ENCODE measurements at regions of chr15 and their contacts with region 1.

Region 1: DNA sequence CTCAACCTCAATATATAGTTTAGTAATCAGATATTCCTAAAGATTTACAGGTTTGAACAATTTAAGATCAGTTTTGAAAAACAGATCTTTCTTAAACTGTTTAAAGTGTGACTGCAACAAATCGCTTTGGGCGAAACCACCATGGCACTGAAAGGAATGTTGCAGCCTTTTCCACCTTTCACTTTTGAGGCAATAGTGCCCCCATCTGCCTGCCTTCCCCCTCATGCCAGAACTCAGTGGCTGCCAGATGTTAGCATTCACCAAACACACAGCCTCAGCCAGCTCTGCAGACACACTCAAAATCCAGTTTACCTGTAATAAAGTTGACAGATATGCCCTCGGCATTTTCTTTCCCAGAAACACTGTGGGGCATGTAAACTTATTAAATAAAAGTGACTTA is 3.3 kb downstream of the LYSMD4 start:
- DNase-seq: peak; percentile 67

Region 2: GRCh38 chr15:99275525-99276128 is 454.3 kb before region 1 on chr15:
- intact Hi-C with region 1: loop called in 1 of 2 experiments (anchors 10 kb)
- DNase-seq: no peak

Region 3: GRCh38 chr15:99450896-99451358 is 279.0 kb before region 1 on chr15:
- intact Hi-C with region 1: no loop called
- DNase-seq: peak; percentile 91

Region 4: DNA sequence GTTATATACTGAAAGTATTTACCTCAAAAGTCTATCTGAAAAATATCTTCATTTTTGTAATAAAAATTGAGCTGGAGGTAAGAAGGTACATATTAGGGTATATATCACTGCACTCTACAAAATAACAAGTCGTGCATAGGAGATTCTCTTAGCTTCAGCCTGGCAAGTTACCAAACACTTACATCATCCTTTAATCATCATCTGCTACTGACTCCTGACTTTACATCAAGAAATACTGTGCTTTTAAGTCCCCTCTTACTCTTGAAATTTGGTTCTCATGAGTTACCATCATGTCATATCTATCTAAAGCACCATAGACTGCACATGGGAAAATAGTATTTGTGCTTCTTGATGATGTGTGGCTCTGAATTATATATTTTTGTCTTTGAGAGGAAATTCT is 47.5 kb before region 1 on chr15:
- intact Hi-C with region 1: no loop called
- DNase-seq: no peak

Region 5: DNA sequence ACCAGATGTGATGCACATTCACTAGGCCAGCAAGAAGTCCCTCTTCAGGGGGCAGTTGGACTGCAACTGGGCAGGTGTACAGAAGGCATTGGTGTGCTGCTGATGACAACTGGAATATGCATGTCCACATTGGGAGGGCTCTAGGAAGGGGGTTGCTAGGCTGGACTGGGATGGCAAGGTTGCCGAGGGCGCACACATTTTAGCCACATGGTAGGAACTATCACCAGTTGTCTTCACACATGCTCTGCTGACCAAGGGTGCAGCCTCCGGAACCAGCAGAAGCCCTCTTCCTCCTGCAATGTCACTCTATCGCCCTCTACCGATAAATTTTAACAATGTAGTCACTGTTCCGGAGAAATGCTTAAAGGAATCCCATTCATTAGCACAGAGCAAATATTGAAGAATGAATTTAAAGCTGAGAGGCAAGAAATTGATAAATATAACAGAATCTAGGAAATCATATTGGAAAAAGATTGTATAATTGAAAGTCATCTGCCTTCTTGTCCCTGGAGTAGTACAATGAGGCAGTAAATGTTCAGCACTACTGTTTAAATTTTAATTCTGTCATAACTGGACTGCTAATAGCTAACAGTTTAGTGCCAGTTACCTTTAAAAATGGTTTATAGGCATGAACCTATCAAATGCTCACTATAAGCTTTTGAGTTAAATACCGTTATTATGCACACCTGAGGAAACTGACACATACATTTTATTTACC is 25.9 kb after region 1 on chr15:
- intact Hi-C with region 1: loop called in 1 of 2 experiments (anchors 1 kb)
- DNase-seq: no peak

Region 6: DNA sequence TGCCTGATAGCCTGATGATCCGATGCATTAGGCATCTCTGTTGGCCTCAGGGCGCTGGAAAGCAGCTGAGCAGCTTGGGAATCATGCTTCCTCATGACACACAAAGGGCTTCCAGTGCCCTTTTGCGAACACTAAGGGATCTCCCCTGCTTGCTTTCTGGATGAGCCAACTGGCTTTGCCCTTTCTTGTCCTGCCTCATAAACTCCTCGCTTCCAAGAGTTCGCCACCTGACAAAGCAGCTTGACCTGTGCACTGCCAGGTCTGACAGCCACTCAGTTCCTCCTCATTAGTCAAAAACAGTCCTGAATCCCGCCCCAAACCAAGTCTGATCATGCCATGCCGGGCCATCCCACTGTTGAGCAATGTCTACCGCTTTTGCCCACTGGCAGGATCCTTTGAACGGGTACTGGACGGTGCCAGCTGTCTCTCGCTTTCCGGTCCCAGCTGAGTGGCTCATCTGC is 268.8 kb after region 1 on chr15:
- intact Hi-C with region 1: no loop called
- DNase-seq: no peak

Measured in posterior vena cava (tissue), 2 donors.